B cell (primary cell): ENCODE measurements at regions of chr4 and their contacts with region 1.

Region 1: DNA sequence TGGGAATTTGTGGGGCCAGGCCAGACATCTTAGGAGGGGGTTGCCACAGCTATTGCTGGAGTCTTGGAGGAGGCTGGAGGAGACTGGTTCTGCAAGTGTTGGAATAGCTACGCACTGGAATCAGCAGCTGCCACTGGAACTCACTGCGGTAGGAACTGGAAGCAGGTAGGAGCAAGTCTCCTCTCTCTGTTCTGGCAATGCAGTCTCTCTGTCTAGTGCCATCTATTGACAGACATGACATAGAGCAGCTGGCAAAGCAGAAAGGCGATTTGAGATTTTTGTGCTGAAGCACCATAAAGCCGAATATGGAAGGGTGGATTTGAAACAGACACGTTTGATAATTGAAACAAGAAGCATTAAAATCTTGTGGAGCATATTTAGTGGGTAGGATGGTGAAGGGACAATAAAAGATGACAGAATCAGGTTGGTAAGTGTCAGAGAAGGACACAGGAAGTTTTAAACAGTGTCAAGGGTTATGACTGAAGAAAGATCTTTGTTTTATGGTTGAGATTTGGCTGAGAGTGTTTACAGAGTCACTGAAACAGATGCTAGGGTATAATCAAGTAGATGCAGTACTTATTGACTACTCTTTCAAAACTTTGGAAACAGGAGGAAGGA is 23.5 kb upstream of the SYNPO2 start:
- DNase-seq: peak; percentile 27
- ATAC-seq: no peak
- H3K4me3 ChIP-seq: no peak overlapping the region
- H3K4me3 Mint-ChIP-seq: no peak overlapping the region
- H3K27ac ChIP-seq: no peak overlapping the region
- H3K27ac Mint-ChIP-seq: no peak overlapping the region
- H3K4me1 ChIP-seq: no peaks in the 10 kb centered on the region
- H3K4me1 Mint-ChIP-seq: no peaks in the 10 kb centered on the region
- H3K27me3 ChIP-seq: no peaks in the 10 kb centered on the region
- H3K27me3 Mint-ChIP-seq: no peaks in the 10 kb centered on the region
- CTCF ChIP-seq: peak; percentile 56

Region 2: GRCh38 chr4:118772081-118772766 is 93.0 kb before region 1 on chr4:
- CTCF ChIA-PET with region 1: interaction called, 20 read pairs
- POLR2A ChIA-PET with region 1: no interaction called
- intact Hi-C with region 1: loop called (anchors 1 kb)
- DNase-seq: peak; percentile 60
- ATAC-seq: peak; percentile 65
- H3K4me3 ChIP-seq: no peak overlapping the region
- H3K4me3 Mint-ChIP-seq: no peak overlapping the region
- H3K27ac ChIP-seq: no peak overlapping the region
- H3K27ac Mint-ChIP-seq: no peak overlapping the region
- H3K4me1 ChIP-seq: no peaks in the 10 kb centered on the region
- H3K4me1 Mint-ChIP-seq: no peaks in the 10 kb centered on the region
- H3K27me3 ChIP-seq: no peaks in the 10 kb centered on the region
- H3K27me3 Mint-ChIP-seq: no peaks in the 10 kb centered on the region
- CTCF ChIP-seq: peak; percentile 85

Region 3: DNA sequence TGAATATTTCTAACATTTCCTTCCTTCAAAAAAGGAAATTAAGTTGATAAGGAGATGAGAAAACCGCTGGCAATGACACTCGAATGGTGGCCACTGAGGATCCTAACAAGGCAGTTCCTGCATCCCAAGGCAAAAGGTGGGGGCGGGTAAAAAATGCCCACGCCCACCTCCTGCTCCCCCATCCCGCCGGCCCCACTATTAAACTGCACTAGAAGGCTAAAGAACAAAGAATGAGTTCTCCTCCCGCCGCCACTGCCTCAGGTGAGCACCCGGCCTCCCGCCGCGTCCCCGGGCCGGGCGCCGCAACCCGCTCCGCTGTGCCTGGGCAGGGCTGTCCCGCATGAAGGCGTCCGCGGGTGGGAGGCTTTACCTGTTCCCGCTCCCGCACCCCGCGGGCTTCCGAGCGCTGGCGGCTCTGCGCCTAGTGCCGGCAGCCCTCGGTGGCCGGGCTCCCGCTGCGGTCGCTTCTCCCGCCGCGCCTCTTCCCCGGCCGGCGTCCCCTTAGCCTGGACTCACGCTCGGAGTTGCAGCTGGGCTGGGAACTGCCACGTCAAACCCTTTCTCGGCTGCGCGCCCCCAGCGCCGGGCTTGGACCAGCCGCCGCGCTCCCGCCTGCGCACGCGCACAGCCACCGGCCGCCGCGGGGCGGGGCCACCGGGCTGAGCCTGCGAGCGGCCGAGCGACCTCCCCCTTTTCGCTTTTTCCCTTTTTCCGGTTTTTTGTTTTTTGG is 29.5 kb before region 1 on chr4 and contains the start of gene SEC24D:
- CTCF ChIA-PET with region 1: no interaction called
- POLR2A ChIA-PET with region 1: no interaction called
- intact Hi-C with region 1: no loop called
- DNase-seq: peak; percentile 89
- ATAC-seq: peak; percentile 88
- H3K4me3 ChIP-seq: peak within 1 kb of the TSS; percentile 59 to 98 (median 89)
- H3K4me3 Mint-ChIP-seq: peak within 1 kb of the TSS; percentile 97
- H3K27ac ChIP-seq: peak within 1 kb of the TSS; percentile 48 to 87
- H3K27ac Mint-ChIP-seq: peak within 1 kb of the TSS; percentile 93
- H3K4me1 ChIP-seq: peaks cover 10 to 11% of the 10 kb centered on the region in 2 donors
- H3K4me1 Mint-ChIP-seq: peaks cover 17% of the 10 kb centered on the region
- H3K27me3 ChIP-seq: no peaks in the 10 kb centered on the region
- H3K27me3 Mint-ChIP-seq: peaks cover 4% of the 10 kb centered on the region
- CTCF ChIP-seq: peak; percentile 11
- total RNA-seq, gene SEC24D: 15.8 and 19.8 TPM in 2 replicates

Region 4: DNA sequence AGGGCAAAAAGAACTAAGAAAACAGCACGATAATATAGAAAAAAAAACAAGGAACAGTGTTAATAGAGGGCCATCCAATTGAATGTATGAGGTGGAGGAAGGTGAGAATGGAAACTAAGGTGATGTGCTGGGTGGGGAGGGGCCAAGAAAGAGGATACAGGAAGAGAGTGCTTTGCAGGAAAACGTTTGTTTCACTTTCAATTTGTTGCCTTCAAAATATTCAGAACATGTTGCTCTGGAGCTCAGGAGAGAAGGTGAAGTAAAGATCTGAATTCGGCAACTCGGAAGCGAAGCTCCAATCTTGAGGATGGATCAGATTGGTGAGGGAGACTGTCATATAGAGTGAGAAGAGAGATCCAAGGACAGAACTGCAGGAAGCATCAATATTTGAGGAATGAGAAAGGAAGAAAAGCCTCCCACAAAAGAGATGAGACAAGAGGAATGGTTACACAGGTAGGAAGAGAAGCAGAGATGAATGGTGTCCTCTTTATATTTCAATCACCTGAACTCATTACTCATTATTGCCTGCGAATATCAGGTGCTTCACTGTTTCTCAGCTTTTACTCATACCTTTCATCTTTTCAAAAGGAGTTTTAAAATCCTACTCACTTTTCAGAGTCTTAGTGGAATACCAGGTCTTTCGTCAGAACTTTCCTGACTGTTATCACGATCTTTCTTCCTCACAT is 14.6 kb before region 1 on chr4:
- CTCF ChIA-PET with region 1: interaction called, 11 read pairs
- POLR2A ChIA-PET with region 1: interaction called, 3 read pairs
- intact Hi-C with region 1: no loop called
- DNase-seq: peak; percentile 63
- ATAC-seq: peak; percentile 82
- H3K4me3 ChIP-seq: peak overlapping the region; percentile 39 to 90 (median 61)
- H3K4me3 Mint-ChIP-seq: peak overlapping the region; percentile 94
- H3K27ac ChIP-seq: peak overlapping the region; percentile 47 to 54
- H3K27ac Mint-ChIP-seq: peak overlapping the region; percentile 87
- H3K4me1 ChIP-seq: peaks cover 13 to 14% of the 10 kb centered on the region in 2 donors
- H3K4me1 Mint-ChIP-seq: peaks cover 20% of the 10 kb centered on the region
- H3K27me3 ChIP-seq: peaks cover 0 to 2% (median 0%) of the 10 kb centered on the region in 4 experiments
- H3K27me3 Mint-ChIP-seq: peaks cover 3% of the 10 kb centered on the region
- CTCF ChIP-seq: no peak